HCT116 (cell line): ENCODE measurements at regions of chr1 and their contacts with region 1.

Region 1: GRCh38 chr1:164786980-164787833 is 228.2 kb downstream of the PBX1 start:
- DNase-seq: peak; percentile 65
- ATAC-seq: peak; percentile 98
- H3K4me3 ChIP-seq: no peak overlapping the region
- H3K27ac ChIP-seq: 0 out of 2 replicates have a peak overlapping the region, but pooled peaks have one; percentile 19
- H3K4me1 ChIP-seq: peaks cover 17 to 20% of the 10 kb centered on the region in 2 experiments; a peak in 3 of 4 replicates
- H3K27me3 ChIP-seq: no peaks in the 10 kb centered on the region
- CTCF ChIP-seq: peak; percentile 68 to 97 (median 90); a peak in 5 of 6 replicates
- POLR2A ChIP-seq: no peak
- RAD21 ChIP-seq: peak; percentile 98

Region 2: GRCh38 chr1:163410073-163410999 is 1376.9 kb before region 1 on chr1:
- CTCF ChIA-PET with region 1: no interaction called
- POLR2A ChIA-PET with region 1: no interaction called
- RAD21 ChIA-PET with region 1: no interaction called
- intact Hi-C with region 1: loop called (anchors 5 kb)
- DNase-seq: peak; percentile 48
- ATAC-seq: peak; percentile 34
- H3K4me3 ChIP-seq: no peak overlapping the region
- H3K27ac ChIP-seq: no peak overlapping the region
- H3K4me1 ChIP-seq: no peaks in the 10 kb centered on the region
- H3K27me3 ChIP-seq: peaks cover 4% of the 10 kb centered on the region; the same call in 1 of the 2 replicates
- CTCF ChIP-seq: peak; percentile 49 to 89 (median 73); a peak in 5 of 6 replicates
- POLR2A ChIP-seq: no peak
- RAD21 ChIP-seq: peak; percentile 78

Region 3: DNA sequence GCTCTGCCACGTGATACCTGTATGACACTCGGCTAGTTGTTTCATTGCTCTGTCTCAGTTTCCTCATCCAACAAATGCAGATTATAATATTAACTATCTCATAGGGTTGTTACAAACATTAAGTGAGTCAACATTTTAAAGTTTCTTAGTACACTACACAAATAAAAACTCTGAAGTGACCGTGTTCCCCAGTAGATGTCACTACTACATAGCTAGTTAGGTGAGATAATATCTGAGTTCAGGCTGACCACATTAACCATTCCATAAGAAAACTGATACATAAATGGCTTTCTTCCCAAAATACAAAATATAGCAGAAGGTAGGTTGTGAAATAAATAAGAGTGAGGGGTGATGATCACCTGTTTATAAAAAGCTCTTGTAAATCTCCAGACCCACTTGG is 1251.4 kb before region 1 on chr1:
- CTCF ChIA-PET with region 1: no interaction called
- POLR2A ChIA-PET with region 1: no interaction called
- RAD21 ChIA-PET with region 1: no interaction called
- intact Hi-C with region 1: loop called (anchors 5 kb)
- DNase-seq: peak; percentile 10
- ATAC-seq: peak; percentile 70
- H3K4me3 ChIP-seq: no peak overlapping the region
- H3K27ac ChIP-seq: no peak overlapping the region
- H3K4me1 ChIP-seq: no peaks in the 10 kb centered on the region
- H3K27me3 ChIP-seq: no peaks in the 10 kb centered on the region
- CTCF ChIP-seq: peak; percentile 19 to 56 (median 31); a peak in 4 of 6 replicates
- POLR2A ChIP-seq: no peak
- RAD21 ChIP-seq: peak; percentile 64

Region 4: DNA sequence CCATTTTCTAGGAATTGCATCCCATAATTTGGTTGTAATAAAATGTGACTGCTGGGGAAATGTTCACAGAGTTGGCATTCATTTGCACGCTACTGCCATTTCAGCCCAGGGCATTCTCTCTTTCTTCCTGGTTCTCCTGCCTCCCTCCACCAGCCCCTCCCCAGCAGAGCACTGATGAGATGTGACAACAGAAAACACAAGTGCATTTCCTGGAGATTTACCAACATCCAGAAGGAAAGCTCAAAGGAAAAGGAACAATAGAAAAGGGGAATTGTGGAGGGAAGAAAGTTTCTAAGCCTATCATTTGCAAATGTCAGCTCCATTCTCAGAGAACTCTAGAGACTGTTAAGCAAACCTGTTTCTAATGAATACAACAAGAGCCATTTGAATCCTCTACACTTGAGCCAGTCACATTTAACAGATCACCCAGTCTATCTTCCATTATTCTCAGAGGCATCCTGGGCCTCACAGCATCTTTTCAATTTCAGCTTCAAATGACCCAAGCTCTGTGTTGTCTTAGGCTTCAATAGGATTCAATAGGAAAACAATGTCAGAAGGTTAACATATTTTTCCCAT is 623.8 kb before region 1 on chr1:
- CTCF ChIA-PET with region 1: interaction called, 3 read pairs
- POLR2A ChIA-PET with region 1: no interaction called
- RAD21 ChIA-PET with region 1: no interaction called
- intact Hi-C with region 1: loop called (anchors 5 kb)
- DNase-seq: no peak
- ATAC-seq: no peak
- H3K4me3 ChIP-seq: no peak overlapping the region
- H3K27ac ChIP-seq: no peak overlapping the region
- H3K4me1 ChIP-seq: no peaks in the 10 kb centered on the region
- H3K27me3 ChIP-seq: no peaks in the 10 kb centered on the region
- CTCF ChIP-seq: no peak
- POLR2A ChIP-seq: no peak
- RAD21 ChIP-seq: no peak

Region 5: GRCh38 chr1:164440232-164440631 is 347.0 kb before region 1 on chr1:
- CTCF ChIA-PET with region 1: no interaction called
- POLR2A ChIA-PET with region 1: no interaction called
- RAD21 ChIA-PET with region 1: no interaction called
- intact Hi-C with region 1: loop called (anchors 5 kb)
- DNase-seq: no peak
- ATAC-seq: peak; percentile 98
- H3K4me3 ChIP-seq: no peak overlapping the region
- H3K27ac ChIP-seq: no peak overlapping the region
- H3K4me1 ChIP-seq: peaks cover 3 to 9% of the 10 kb centered on the region in 2 experiments; a peak in 3 of 4 replicates
- H3K27me3 ChIP-seq: no peaks in the 10 kb centered on the region
- CTCF ChIP-seq: peak in 2 of 3 experiments; percentile 60 to 65; a peak in 4 of 6 replicates
- POLR2A ChIP-seq: no peak
- RAD21 ChIP-seq: peak; percentile 58

Region 6: DNA sequence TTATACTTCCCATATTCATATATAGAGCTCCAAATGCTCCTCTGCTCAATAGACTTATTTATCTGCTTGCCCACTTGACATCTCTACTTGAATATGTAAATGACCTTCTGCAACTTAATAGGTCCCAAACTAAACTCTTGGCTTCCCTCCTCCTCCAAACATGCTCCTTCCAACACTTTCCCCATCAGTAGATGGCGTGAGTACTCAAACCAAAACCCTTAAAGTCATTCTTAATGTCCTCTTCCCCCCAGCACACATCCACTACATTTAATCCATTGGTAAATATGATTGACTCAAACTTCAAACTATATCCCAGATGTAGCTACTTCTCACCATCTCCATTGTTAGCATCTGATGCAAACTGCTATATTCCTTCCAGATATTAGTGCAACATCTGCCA is 276.8 kb before region 1 on chr1:
- CTCF ChIA-PET with region 1: no interaction called
- POLR2A ChIA-PET with region 1: no interaction called
- RAD21 ChIA-PET with region 1: no interaction called
- intact Hi-C with region 1: loop called (anchors 1 kb)
- DNase-seq: no peak
- ATAC-seq: no peak; the same call in 1 of the 2 replicates
- H3K4me3 ChIP-seq: no peak overlapping the region
- H3K27ac ChIP-seq: no peak overlapping the region
- H3K4me1 ChIP-seq: no peaks in the 10 kb centered on the region
- H3K27me3 ChIP-seq: no peaks in the 10 kb centered on the region; the same call in 1 of the 2 replicates
- CTCF ChIP-seq: no peak; a peak in 1 of 6 replicates
- POLR2A ChIP-seq: no peak
- RAD21 ChIP-seq: peak; percentile 64

Region 7: GRCh38 chr1:164673584-164674214 is 113.5 kb before region 1 on chr1:
- CTCF ChIA-PET with region 1: interaction called, 18 read pairs
- POLR2A ChIA-PET with region 1: no interaction called
- RAD21 ChIA-PET with region 1: interaction called in 1 of 2 experiments, 6 read pairs
- intact Hi-C with region 1: loop called (anchors 1 kb)
- DNase-seq: no peak
- ATAC-seq: peak; percentile 68
- H3K4me3 ChIP-seq: no peak overlapping the region
- H3K27ac ChIP-seq: no peak overlapping the region
- H3K4me1 ChIP-seq: peaks cover 36 to 38% of the 10 kb centered on the region in 2 experiments
- H3K27me3 ChIP-seq: no peaks in the 10 kb centered on the region
- CTCF ChIP-seq: peak; percentile 40 to 97 (median 93); a peak in 5 of 6 replicates
- POLR2A ChIP-seq: no peak
- RAD21 ChIP-seq: peak; percentile 54

Region 8: GRCh38 chr1:164937291-164937690 is 150.1 kb after region 1 on chr1:
- CTCF ChIA-PET with region 1: no interaction called
- POLR2A ChIA-PET with region 1: no interaction called
- RAD21 ChIA-PET with region 1: no interaction called
- intact Hi-C with region 1: no loop called
- DNase-seq: no peak
- ATAC-seq: no peak
- H3K4me3 ChIP-seq: no peak overlapping the region
- H3K27ac ChIP-seq: no peak overlapping the region
- H3K4me1 ChIP-seq: no peaks in the 10 kb centered on the region
- H3K27me3 ChIP-seq: no peaks in the 10 kb centered on the region
- CTCF ChIP-seq: no peak
- POLR2A ChIP-seq: no peak
- RAD21 ChIP-seq: no peak